Colonic mucosa (tissue), 4 donors: ENCODE measurements at regions of chr17 and their contacts with region 1.

Region 1: GRCh38 chr17:43986225-43986981 is 18.0 kb upstream of the NAGS start:
- DNase-seq: no peak
- H3K4me3 ChIP-seq: no peak overlapping the region
- H3K27ac ChIP-seq: no peak overlapping the region
- H3K4me1 ChIP-seq: peaks cover 8% of the 10 kb centered on the region
- H3K27me3 ChIP-seq: peaks cover 29% of the 10 kb centered on the region
- CTCF ChIP-seq: no peak

Region 2: DNA sequence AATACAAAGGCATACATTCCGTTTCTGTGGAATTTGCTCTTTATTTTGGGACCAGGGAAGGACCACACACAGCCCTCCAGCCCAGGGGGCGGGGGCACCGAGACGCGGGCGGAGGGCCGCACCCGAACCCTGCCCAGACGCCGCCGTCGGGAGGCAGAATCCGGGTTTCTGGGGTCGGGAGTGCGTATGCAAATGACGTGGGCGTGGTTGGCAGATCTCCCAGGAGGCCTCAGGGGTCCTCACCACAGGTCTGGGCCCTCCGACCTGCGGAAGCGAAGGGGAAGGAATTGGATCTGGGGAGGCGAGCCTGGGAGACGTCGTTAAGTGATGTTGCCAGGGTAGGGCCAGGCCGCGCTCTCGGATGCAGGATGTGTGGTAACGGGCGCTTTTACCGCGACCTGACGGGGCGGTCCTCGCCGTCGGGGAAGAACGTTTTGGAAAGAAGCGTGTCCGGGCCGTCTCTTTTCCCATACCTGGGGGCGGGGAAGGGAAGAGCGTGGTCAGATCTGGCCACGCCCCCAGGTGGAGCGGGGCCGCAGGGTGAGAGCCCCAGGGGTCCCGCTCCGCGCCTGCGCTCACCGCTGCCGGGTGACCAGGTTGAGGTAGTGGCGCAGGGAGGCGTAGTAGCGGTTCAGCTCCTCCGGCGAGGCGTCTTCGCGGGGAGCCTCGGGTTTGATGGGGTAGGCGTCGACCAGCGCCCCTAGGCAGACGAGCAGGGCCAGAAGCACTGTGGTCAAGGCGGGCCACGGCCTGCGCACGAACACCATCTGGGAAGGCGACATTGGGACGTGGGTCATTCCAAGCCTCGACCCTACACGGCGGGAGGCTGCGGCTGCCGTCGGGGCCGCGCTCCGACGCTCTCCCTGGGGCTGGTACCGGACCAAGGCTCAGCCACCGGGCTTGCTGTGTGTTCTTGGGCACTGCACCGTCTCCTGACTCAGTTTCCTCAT is 33.4 kb before region 1 on chr17:
- intact Hi-C with region 1: loop called (anchors 5 kb)
- DNase-seq: no peak
- H3K4me3 ChIP-seq: no peak overlapping the region
- H3K27ac ChIP-seq: no peak overlapping the region
- H3K4me1 ChIP-seq: peaks cover 3% of the 10 kb centered on the region
- H3K27me3 ChIP-seq: peaks cover 32% of the 10 kb centered on the region
- CTCF ChIP-seq: no peak

Region 3: GRCh38 chr17:44095642-44096496 is 109.5 kb after region 1 on chr17:
- intact Hi-C with region 1: no loop called
- DNase-seq: peak; percentile 81
- H3K4me3 ChIP-seq: no peak overlapping the region
- H3K27ac ChIP-seq: peak overlapping the region; percentile 84
- H3K4me1 ChIP-seq: peaks cover 10% of the 10 kb centered on the region
- H3K27me3 ChIP-seq: no peaks in the 10 kb centered on the region
- CTCF ChIP-seq: no peak

Region 4: GRCh38 chr17:44141717-44142285 is 155.4 kb after region 1 on chr17 and contains the start of gene HROB:
- intact Hi-C with region 1: no loop called
- DNase-seq: peak; percentile 99
- H3K4me3 ChIP-seq: peak within 1 kb of the TSS; percentile 83
- H3K27ac ChIP-seq: no peak within 1 kb of the TSS
- H3K4me1 ChIP-seq: no peaks in the 10 kb centered on the region
- H3K27me3 ChIP-seq: no peaks in the 10 kb centered on the region
- CTCF ChIP-seq: peak; percentile 87
- total RNA-seq, gene HROB: 2.7 to 11.5 TPM